ENCODE measurements at regions of chr17 and their contacts with region 1.

Region 1: GRCh38 chr17:80575057-80575875 is 30.6 kb downstream of the RPTOR start:
- H3K4me3 ChIP-seq: no peak overlapping the region
- H3K27ac ChIP-seq: no peak overlapping the region
- H3K4me1 ChIP-seq: no peaks in the 10 kb centered on the region
- CTCF ChIP-seq: peak; percentile 98

Region 2: GRCh38 chr17:80426681-80427326 is 148.5 kb before region 1 on chr17:
- CTCF ChIA-PET with region 1: interaction called, 42 read pairs
- POLR2A ChIA-PET with region 1: interaction called, 3 read pairs
- H3K4me3 ChIP-seq: no peak overlapping the region
- H3K27ac ChIP-seq: no peak overlapping the region
- H3K4me1 ChIP-seq: no peaks in the 10 kb centered on the region
- CTCF ChIP-seq: peak; percentile 98

Region 3: GRCh38 chr17:80477647-80478478 is 97.4 kb before region 1 on chr17:
- CTCF ChIA-PET with region 1: interaction called, 28 read pairs
- POLR2A ChIA-PET with region 1: no interaction called
- H3K4me3 ChIP-seq: peak overlapping the region; percentile 49
- H3K27ac ChIP-seq: peak overlapping the region; percentile 86; the same call in 1 of the 2 replicates
- H3K4me1 ChIP-seq: peaks cover 7% of the 10 kb centered on the region
- CTCF ChIP-seq: peak; percentile 45; the same call in 1 of the 2 replicates

Region 4: DNA sequence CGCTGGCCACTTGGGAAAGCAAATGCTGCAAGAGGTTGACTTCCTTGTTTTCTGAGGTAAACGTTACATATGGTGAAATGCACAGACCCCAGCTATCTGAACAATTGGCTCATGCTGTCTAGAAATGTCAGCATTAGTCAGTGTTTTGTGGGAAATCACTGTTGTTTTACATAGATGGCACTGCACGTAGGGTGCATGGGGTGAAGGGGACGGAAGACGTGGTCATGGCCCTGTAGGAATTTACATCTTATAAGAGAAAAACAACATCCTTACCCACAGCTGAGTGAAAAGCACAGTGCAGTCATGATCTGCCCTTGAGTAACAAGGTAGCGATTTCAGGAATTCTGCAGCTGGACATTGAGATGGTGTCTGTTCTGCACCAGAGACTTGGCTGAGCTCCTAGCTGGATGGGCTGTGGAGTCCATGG is 15.4 kb before region 1 on chr17:
- CTCF ChIA-PET with region 1: interaction called, 45 read pairs
- POLR2A ChIA-PET with region 1: no interaction called
- H3K4me3 ChIP-seq: no peak overlapping the region
- H3K27ac ChIP-seq: no peak overlapping the region
- H3K4me1 ChIP-seq: no peaks in the 10 kb centered on the region
- CTCF ChIP-seq: no peak

Region 5: GRCh38 chr17:80605326-80606066 is 30.2 kb after region 1 on chr17:
- CTCF ChIA-PET with region 1: interaction called, 11 read pairs
- POLR2A ChIA-PET with region 1: no interaction called
- H3K4me3 ChIP-seq: no peak overlapping the region
- H3K27ac ChIP-seq: no peak overlapping the region
- H3K4me1 ChIP-seq: peaks cover 10% of the 10 kb centered on the region
- CTCF ChIP-seq: no peak

Region 6: DNA sequence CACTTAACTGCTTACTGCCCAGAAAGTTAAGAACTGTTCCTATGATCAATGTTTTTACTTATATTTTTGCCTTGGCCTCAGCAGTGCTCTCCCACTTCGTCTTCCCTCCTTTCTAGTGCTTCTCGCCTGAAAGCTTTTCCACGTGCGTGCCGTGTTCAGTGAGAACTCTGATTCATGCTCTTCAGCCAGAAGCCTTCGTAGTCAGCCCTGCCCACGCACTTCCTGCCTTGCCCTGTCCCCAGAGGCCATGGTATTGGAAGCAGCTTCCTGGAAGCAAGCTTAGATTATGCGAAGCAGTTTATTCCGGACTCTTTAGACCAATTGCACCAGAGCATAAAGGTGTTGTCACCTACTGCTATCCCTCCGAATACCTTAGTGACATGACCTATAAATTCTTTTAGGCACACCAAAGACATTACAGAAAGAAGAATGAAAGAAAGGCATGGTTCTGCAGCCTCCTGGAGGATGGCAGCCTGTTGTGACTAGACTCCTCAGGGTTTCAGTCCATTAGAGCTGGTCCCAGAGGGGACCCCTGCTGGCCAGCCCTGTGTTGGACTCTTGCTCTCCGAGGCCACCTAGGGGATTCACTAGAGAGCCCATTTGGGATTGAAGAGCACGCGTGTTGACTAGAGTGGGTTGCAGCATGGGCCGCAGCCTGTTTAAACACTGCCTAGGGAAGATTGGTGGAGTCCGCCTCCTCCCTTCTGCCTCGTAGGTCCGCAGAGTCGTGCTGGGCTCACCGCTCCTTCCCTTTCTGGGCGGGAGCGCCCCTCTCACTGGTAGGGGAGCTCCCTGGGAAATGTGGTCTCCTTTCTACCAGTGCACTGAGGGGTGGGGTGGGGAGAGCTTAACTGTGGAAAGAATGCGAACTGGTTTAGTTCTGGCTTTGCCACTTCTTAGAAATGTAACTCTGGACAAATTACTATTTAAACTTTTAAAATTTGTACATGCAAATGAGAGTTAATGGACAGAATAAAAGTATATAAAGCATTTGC is 74.7 kb after region 1 on chr17:
- CTCF ChIA-PET with region 1: interaction called, 23 read pairs
- POLR2A ChIA-PET with region 1: no interaction called
- H3K4me3 ChIP-seq: no peak overlapping the region
- H3K27ac ChIP-seq: no peak overlapping the region
- H3K4me1 ChIP-seq: peaks cover 17% of the 10 kb centered on the region
- CTCF ChIP-seq: peak; percentile 66

Region 7: GRCh38 chr17:80855948-80856862 is 280.9 kb after region 1 on chr17:
- CTCF ChIA-PET with region 1: no interaction called
- POLR2A ChIA-PET with region 1: no interaction called
- H3K4me3 ChIP-seq: no peak overlapping the region
- H3K27ac ChIP-seq: 0 out of 2 replicates have a peak overlapping the region, but pooled peaks have one; percentile 10
- H3K4me1 ChIP-seq: peaks cover 3% of the 10 kb centered on the region; the same call in 1 of the 2 replicates
- CTCF ChIP-seq: no peak